Caco-2 (cell line): ENCODE measurements at regions of chr5 and their contacts with region 1.

Region 1: GRCh38 chr5:64784451-64785025 is 15.8 kb downstream of the CWC27 start:
- DNase-seq: peak; percentile 72 to 73
- H3K4me3 ChIP-seq: no peak overlapping the region
- H3K4me3 Mint-ChIP-seq: no peak overlapping the region
- H3K27ac Mint-ChIP-seq: no peak overlapping the region
- H3K4me1 ChIP-seq: no peaks in the 10 kb centered on the region
- H3K4me1 Mint-ChIP-seq: no peaks in the 10 kb centered on the region
- H3K27me3 ChIP-seq: no peaks in the 10 kb centered on the region
- H3K27me3 Mint-ChIP-seq: no peaks in the 10 kb centered on the region
- CTCF ChIP-seq: peak; percentile 81

Region 2: DNA sequence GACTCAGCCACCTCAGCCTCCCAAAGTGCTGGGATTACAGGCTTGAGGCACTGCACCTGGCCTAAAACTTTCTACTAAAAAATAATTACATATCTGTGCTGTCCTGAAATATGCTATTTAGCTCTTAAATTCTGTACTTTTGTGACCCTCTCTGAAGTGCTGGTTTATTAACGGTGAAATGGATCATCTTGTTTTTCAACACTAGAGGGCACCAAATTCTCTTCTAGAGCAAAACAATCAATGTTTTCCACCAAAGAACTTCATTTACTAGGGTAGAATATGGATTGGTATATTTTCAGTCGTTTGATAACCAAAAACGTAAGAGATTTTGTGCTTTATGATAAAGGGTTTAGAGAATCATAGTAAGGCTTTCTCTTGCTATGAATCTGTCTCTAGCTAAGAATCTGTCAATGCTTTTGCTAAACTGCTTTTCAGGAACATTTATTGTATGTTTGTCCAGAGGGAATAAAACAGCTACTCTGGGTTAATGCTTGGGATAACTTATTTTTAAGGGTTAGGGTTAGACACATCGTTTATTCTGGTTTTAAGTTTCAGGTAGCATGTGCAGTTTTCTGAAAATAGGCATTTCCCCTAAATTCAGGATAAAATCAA is 555.3 kb before region 1 on chr5:
- CTCF ChIA-PET with region 1: no interaction called
- POLR2A ChIA-PET with region 1: no interaction called
- intact Hi-C with region 1: loop called (anchors 10 kb)
- DNase-seq: peak in 1 of 2 experiments; percentile 26
- H3K4me3 ChIP-seq: no peak overlapping the region
- H3K4me3 Mint-ChIP-seq: no peak overlapping the region
- H3K27ac Mint-ChIP-seq: no peak overlapping the region
- H3K4me1 ChIP-seq: no peaks in the 10 kb centered on the region
- H3K4me1 Mint-ChIP-seq: no peaks in the 10 kb centered on the region
- H3K27me3 ChIP-seq: no peaks in the 10 kb centered on the region
- H3K27me3 Mint-ChIP-seq: no peaks in the 10 kb centered on the region
- CTCF ChIP-seq: peak; percentile 38 to 54

Region 3: DNA sequence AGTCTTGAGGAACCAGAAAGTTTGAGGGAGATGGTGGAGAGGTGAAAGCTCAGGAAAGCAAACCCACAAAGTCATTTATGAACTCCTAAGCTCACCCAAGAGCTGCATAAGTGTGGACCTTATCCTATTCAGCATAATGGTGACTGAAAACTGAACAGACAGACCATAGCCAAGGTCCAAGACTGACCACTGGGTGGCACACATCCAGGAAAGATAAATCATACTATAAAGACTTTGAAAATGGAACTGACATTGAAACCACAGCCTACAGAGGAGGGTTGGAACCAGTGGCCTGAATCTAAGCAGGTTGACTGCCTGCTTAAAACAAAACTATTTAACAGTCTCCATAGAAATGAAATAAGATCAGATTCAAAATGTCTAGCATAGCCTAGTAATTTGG is 399.8 kb before region 1 on chr5:
- CTCF ChIA-PET with region 1: no interaction called
- POLR2A ChIA-PET with region 1: no interaction called
- intact Hi-C with region 1: loop called (anchors 1 kb)
- DNase-seq: peak; percentile 37 to 46
- H3K4me3 ChIP-seq: no peak overlapping the region
- H3K4me3 Mint-ChIP-seq: no peak overlapping the region
- H3K27ac Mint-ChIP-seq: no peak overlapping the region
- H3K4me1 ChIP-seq: no peaks in the 10 kb centered on the region
- H3K4me1 Mint-ChIP-seq: no peaks in the 10 kb centered on the region
- H3K27me3 ChIP-seq: no peaks in the 10 kb centered on the region
- H3K27me3 Mint-ChIP-seq: peaks cover 4% of the 10 kb centered on the region
- CTCF ChIP-seq: peak; percentile 44 to 73

Region 4: GRCh38 chr5:64634997-64635686 is 149.4 kb before region 1 on chr5:
- CTCF ChIA-PET with region 1: no interaction called
- POLR2A ChIA-PET with region 1: no interaction called
- intact Hi-C with region 1: loop called (anchors 1 kb)
- DNase-seq: peak in 1 of 2 experiments; percentile 21
- H3K4me3 ChIP-seq: no peak overlapping the region
- H3K4me3 Mint-ChIP-seq: no peak overlapping the region
- H3K27ac Mint-ChIP-seq: no peak overlapping the region
- H3K4me1 ChIP-seq: no peaks in the 10 kb centered on the region
- H3K4me1 Mint-ChIP-seq: no peaks in the 10 kb centered on the region
- H3K27me3 ChIP-seq: no peaks in the 10 kb centered on the region
- H3K27me3 Mint-ChIP-seq: peaks cover 9% of the 10 kb centered on the region
- CTCF ChIP-seq: peak; percentile 48 to 88

Region 5: GRCh38 chr5:64680289-64680688 is 104.2 kb before region 1 on chr5:
- CTCF ChIA-PET with region 1: no interaction called
- POLR2A ChIA-PET with region 1: no interaction called
- intact Hi-C with region 1: loop called (anchors 1 kb)
- DNase-seq: peak; percentile 44 to 50
- H3K4me3 ChIP-seq: no peak overlapping the region
- H3K4me3 Mint-ChIP-seq: no peak overlapping the region
- H3K27ac Mint-ChIP-seq: no peak overlapping the region
- H3K4me1 ChIP-seq: no peaks in the 10 kb centered on the region
- H3K4me1 Mint-ChIP-seq: peaks cover 4% of the 10 kb centered on the region
- H3K27me3 ChIP-seq: no peaks in the 10 kb centered on the region; the same call in 1 of the 2 replicates
- H3K27me3 Mint-ChIP-seq: peaks cover 3% of the 10 kb centered on the region
- CTCF ChIP-seq: peak; percentile 40 to 60

Region 6: GRCh38 chr5:64854855-64855254 is 70.3 kb after region 1 on chr5:
- CTCF ChIA-PET with region 1: no interaction called
- POLR2A ChIA-PET with region 1: no interaction called
- intact Hi-C with region 1: no loop called
- DNase-seq: no peak
- H3K4me3 ChIP-seq: no peak overlapping the region
- H3K4me3 Mint-ChIP-seq: no peak overlapping the region
- H3K27ac Mint-ChIP-seq: no peak overlapping the region
- H3K4me1 ChIP-seq: no peaks in the 10 kb centered on the region
- H3K4me1 Mint-ChIP-seq: no peaks in the 10 kb centered on the region
- H3K27me3 ChIP-seq: no peaks in the 10 kb centered on the region
- H3K27me3 Mint-ChIP-seq: no peaks in the 10 kb centered on the region
- CTCF ChIP-seq: no peak

Region 7: GRCh38 chr5:65066385-65067146 is 282.0 kb after region 1 on chr5:
- CTCF ChIA-PET with region 1: no interaction called
- POLR2A ChIA-PET with region 1: no interaction called
- intact Hi-C with region 1: no loop called
- DNase-seq: no peak
- H3K4me3 ChIP-seq: no peak overlapping the region
- H3K4me3 Mint-ChIP-seq: no peak overlapping the region
- H3K27ac Mint-ChIP-seq: no peak overlapping the region
- H3K4me1 ChIP-seq: no peaks in the 10 kb centered on the region
- H3K4me1 Mint-ChIP-seq: no peaks in the 10 kb centered on the region
- H3K27me3 ChIP-seq: no peaks in the 10 kb centered on the region
- H3K27me3 Mint-ChIP-seq: peaks cover 11% of the 10 kb centered on the region
- CTCF ChIP-seq: no peak